ENCODE measurements at regions of chr12 and their contacts with region 1.

Region 1: GRCh38 chr12:6873094-6874014 is at the start of gene SPSB2:
- DNase-seq: peak; percentile 93
- H3K4me3 Mint-ChIP-seq: peak within 1 kb of the TSS; percentile 91
- H3K27ac Mint-ChIP-seq: peak within 1 kb of the TSS; percentile 77
- H3K4me1 Mint-ChIP-seq: peaks cover 24% of the 10 kb centered on the region
- H3K27me3 Mint-ChIP-seq: no peaks in the 10 kb centered on the region
- CTCF ChIP-seq: no peak
- total RNA-seq, gene SPSB2: 9.2 and 10.8 TPM in 2 replicates

Region 2: DNA sequence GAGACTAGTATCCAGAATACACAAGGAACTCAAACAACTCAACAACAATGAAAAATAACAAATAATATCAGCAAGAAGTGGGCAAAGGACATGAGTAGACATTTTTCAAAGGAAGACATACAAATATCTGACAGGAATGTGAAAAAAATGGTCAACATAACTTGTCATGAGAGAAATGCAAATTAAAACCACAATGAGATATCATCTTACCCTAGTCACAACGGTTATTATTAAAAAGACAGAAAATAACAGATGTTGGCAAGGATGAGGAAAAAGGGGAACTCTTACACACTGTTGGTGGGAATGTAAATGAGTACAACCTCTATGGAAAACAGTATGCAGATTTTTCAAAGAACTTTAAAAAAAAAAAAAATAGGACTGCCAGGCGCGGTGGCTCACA is 769.3 kb before region 1 on chr12:
- CTCF ChIA-PET with region 1: no interaction called
- POLR2A ChIA-PET with region 1: no interaction called
- intact Hi-C with region 1: no loop called
- DNase-seq: no peak
- H3K4me3 Mint-ChIP-seq: no peak overlapping the region
- H3K27ac Mint-ChIP-seq: no peak overlapping the region
- H3K4me1 Mint-ChIP-seq: no peaks in the 10 kb centered on the region
- H3K27me3 Mint-ChIP-seq: no peaks in the 10 kb centered on the region
- CTCF ChIP-seq: no peak

Region 3: GRCh38 chr12:6884539-6884938 is 11.2 kb after region 1 on chr12:
- CTCF ChIA-PET with region 1: interaction called, 22 read pairs
- POLR2A ChIA-PET with region 1: interaction called, 14 read pairs
- intact Hi-C with region 1: no loop called
- DNase-seq: no peak
- H3K4me3 Mint-ChIP-seq: no peak overlapping the region
- H3K27ac Mint-ChIP-seq: no peak overlapping the region
- H3K4me1 Mint-ChIP-seq: no peaks in the 10 kb centered on the region
- H3K27me3 Mint-ChIP-seq: no peaks in the 10 kb centered on the region
- CTCF ChIP-seq: no peak

Region 4: GRCh38 chr12:6890789-6891645 is 17.7 kb after region 1 on chr12:
- CTCF ChIA-PET with region 1: interaction called, 64 read pairs
- POLR2A ChIA-PET with region 1: interaction called, 37 read pairs
- intact Hi-C with region 1: loop called (anchors 1 kb)
- DNase-seq: peak; percentile 93
- H3K4me3 Mint-ChIP-seq: peak overlapping the region; percentile 67
- H3K27ac Mint-ChIP-seq: peak overlapping the region; percentile 74
- H3K4me1 Mint-ChIP-seq: no peaks in the 10 kb centered on the region
- H3K27me3 Mint-ChIP-seq: no peaks in the 10 kb centered on the region
- CTCF ChIP-seq: peak; percentile 60

Region 5: DNA sequence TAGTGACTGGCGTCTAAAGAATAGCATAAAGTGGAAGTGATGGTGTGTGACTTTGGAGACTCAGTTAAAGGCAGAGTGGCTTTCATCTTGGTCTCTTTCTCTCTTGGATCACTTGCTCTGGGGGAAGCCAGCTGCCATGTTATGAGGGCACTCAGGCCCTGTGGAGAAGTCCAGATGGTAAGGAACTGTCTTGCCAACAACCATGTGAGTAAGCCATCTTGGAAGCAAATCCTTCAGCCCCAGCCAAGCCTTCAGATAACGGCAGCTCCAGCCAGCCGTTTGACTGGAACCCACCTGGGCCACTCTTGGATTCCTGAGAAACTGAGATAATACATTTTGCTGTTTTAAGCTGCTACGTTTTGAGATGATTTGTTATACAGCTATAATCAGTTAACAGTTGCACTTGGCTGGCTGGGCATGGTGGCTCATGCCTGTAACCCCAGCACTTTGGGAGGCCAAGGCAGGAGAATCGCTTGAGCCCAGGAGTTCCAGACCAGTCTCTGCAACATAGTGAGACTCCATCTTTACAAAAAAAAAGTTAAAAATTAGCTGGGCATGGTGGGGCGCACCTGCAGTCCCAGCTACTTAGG is 23.6 kb after region 1 on chr12:
- CTCF ChIA-PET with region 1: interaction called, 64 read pairs
- POLR2A ChIA-PET with region 1: interaction called, 37 read pairs
- intact Hi-C with region 1: no loop called
- DNase-seq: no peak
- H3K4me3 Mint-ChIP-seq: no peak overlapping the region
- H3K27ac Mint-ChIP-seq: no peak overlapping the region
- H3K4me1 Mint-ChIP-seq: peaks cover 5% of the 10 kb centered on the region
- H3K27me3 Mint-ChIP-seq: no peaks in the 10 kb centered on the region
- CTCF ChIP-seq: no peak

Region 6: GRCh38 chr12:6904280-6905278 is 31.2 kb after region 1 on chr12 and contains the start of gene LRRC23:
- CTCF ChIA-PET with region 1: interaction called, 12 read pairs
- POLR2A ChIA-PET with region 1: interaction called, 14 read pairs
- intact Hi-C with region 1: no loop called
- DNase-seq: peak; percentile 96
- H3K4me3 Mint-ChIP-seq: no peak within 1 kb of the TSS
- H3K27ac Mint-ChIP-seq: no peak within 1 kb of the TSS
- H3K4me1 Mint-ChIP-seq: peaks cover 2% of the 10 kb centered on the region
- H3K27me3 Mint-ChIP-seq: no peaks in the 10 kb centered on the region
- CTCF ChIP-seq: no peak
- total RNA-seq, gene LRRC23: 7.5 and 9.1 TPM in 2 replicates

Region 7: GRCh38 chr12:6909421-6910145 is 36.2 kb after region 1 on chr12:
- CTCF ChIA-PET with region 1: interaction called, 12 read pairs
- POLR2A ChIA-PET with region 1: interaction called, 14 read pairs
- intact Hi-C with region 1: no loop called
- DNase-seq: no peak
- H3K4me3 Mint-ChIP-seq: no peak overlapping the region
- H3K27ac Mint-ChIP-seq: no peak overlapping the region
- H3K4me1 Mint-ChIP-seq: peaks cover 2% of the 10 kb centered on the region
- H3K27me3 Mint-ChIP-seq: peaks cover 11% of the 10 kb centered on the region
- CTCF ChIP-seq: no peak

Region 8: DNA sequence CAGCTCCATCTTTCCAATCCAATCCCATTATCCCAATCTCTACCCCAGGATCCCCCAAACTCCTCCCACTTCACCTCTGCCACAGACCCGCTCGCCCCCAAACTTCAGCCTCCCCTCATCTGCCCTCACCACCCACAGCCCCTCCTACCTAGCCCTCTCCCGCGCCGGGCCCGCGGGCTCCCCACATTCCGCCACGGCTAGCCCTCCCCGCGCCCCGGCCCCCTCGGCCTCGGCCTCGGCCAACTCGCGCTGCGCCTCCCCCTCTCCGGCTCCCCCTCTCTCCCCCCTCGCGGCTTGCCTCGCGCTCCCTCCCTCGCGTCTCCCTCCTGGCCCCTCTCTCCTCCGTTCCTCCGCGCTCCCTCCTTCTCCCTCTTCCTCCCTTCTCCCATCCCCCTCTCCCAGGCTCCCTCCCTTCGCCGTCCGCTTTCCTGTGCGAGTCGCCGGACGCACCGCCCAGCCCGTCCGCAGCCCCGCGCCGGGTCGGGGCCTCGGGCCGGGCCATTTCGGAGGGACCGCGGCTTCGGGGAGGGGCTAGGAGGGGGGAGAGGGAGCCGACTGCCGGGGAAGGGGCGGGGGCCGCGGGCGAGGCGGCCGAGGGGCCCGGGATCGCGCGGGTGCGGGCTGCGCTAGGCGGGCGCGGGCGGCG is 54.1 kb after region 1 on chr12 and contains the start of gene ATN1:
- CTCF ChIA-PET with region 1: interaction called, 52 read pairs
- POLR2A ChIA-PET with region 1: interaction called, 81 read pairs
- intact Hi-C with region 1: no loop called
- DNase-seq: peak; percentile 66
- H3K4me3 Mint-ChIP-seq: peak within 1 kb of the TSS; percentile 91
- H3K27ac Mint-ChIP-seq: peak within 1 kb of the TSS; percentile 92
- H3K4me1 Mint-ChIP-seq: peaks cover 69% of the 10 kb centered on the region
- H3K27me3 Mint-ChIP-seq: no peaks in the 10 kb centered on the region
- CTCF ChIP-seq: no peak
- total RNA-seq, gene ATN1: 83.7 and 84.7 TPM in 2 replicates

Measured in MCF 10A (cell line).